ENCODE measurements at regions of chr19 and their contacts with region 1.

Region 1: DNA sequence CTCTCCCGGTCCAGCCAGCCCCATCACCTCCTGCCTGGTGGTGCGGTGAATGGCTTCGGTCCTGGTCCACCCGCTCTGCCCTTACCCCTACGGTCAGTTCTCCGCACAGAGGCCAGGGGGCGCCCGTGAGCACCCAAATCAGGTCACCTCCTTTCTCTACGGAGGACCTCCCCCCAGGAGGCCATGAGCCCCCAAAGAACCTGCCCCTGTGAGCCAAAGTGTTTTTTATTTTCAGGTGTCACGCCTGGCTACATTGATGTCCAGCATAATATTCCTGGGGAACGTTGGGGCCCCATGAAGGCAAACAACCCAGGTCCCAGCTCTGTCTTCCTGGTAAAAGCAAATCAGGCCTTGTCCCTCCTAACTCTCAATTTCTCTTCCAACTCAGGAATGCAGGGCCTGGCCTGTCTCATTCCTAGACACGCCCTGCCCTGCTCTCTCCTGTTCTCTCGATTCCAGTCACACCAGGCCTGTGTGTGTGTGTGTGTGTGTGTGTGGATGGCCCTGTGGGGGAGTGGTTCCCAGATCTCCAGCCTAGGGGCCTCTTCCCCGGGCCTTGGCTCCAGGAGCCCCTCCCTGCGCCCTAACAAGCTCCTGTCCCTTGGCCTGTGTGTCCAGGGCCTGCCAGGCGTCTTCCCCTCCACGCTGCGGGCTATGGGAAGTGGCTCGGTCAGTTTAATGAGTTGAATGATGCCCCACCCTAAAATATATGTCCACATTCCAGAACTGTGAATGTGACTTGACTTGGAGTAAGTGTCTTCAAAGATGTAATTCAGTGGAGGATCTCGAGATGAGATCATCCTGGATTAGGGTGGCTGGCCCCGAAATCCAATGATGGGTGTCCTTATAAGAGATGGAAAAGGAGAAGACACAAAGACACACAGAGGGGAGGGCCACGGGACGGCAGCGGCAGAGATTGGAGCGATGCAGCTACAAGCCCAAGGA is 9.8 kb upstream of the GIPC1 start:
- DNase-seq: peak; percentile 79
- H3K4me3 Mint-ChIP-seq: no peak overlapping the region
- H3K27ac Mint-ChIP-seq: peak overlapping the region; percentile 57
- H3K4me1 Mint-ChIP-seq: peaks cover 44% of the 10 kb centered on the region
- H3K27me3 Mint-ChIP-seq: peaks cover 2% of the 10 kb centered on the region

Region 2: DNA sequence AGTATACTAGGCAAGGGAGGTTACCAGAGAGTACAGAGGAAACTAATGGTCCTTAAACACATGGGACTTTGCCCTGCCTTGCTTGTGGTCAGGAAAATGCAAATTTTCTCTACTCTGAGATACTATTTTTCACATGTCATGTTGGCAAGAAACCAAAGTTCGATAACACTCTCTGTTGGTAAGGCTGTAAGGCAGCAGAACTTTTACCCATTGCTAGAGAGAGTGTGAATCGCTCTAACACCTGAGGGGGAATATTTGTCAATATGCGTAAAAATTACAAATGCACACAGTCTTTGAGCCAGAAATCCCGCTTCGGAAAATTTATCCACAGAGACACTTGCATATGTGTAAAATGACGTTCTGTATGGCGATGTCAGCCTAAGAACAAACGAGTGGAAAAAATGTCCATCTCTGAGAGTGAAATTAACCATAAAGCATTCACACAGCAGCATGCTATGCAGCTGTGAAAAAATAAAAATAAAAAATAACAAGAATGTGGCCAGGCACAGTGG is 490.2 kb before region 1 on chr19:
- CTCF ChIA-PET with region 1: no interaction called
- POLR2A ChIA-PET with region 1: no interaction called
- DNase-seq: no peak
- H3K4me3 Mint-ChIP-seq: no peak overlapping the region
- H3K27ac Mint-ChIP-seq: no peak overlapping the region
- H3K4me1 Mint-ChIP-seq: peaks cover 7% of the 10 kb centered on the region
- H3K27me3 Mint-ChIP-seq: no peaks in the 10 kb centered on the region

Region 3: DNA sequence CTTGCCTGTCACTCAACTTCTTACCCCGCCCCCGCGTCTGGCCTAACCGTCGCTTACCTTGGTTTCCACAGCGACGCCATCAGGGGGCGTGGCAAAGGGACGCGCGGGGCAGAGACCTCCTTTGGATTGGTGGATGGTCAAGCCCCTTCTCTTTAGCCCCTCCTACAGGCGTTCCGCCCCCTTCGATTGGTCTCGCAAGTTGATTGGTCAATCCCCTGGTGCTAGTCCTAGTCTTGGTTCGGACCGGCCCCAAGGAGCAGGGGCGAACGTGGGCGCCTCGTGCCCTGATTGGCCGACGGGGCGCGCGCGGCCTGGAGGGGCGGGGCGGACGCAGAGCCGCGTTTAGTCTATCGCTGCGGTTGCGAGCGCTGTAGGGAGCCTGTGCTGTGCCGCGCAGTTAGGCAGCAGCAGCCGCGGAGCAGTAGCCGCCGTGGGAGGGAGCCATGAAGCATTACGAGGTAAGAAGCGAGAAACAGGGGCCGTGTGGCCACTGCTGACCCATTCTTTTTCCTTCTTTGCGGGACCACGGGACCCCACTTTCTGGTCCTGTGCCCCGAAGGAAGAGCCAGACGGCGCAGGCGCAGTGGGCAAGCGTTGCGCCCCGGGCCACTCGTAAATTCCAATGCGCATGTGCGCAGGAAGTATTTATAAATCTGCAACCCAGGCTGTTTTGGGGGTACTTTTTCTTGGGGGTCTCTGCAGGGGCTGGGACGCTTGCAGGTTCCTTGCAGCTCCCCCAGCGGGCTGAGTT is 23.7 kb after region 1 on chr19 and contains the start of gene TECR:
- CTCF ChIA-PET with region 1: interaction called, 20 read pairs
- POLR2A ChIA-PET with region 1: interaction called, 316 read pairs
- DNase-seq: peak; percentile 100
- H3K4me3 Mint-ChIP-seq: peak within 1 kb of the TSS; percentile 95
- H3K27ac Mint-ChIP-seq: peak within 1 kb of the TSS; percentile 91
- H3K4me1 Mint-ChIP-seq: peaks cover 30% of the 10 kb centered on the region
- H3K27me3 Mint-ChIP-seq: no peaks in the 10 kb centered on the region
- total RNA-seq, gene TECR: 171 to 178 TPM

Measured in activated CD4-positive, alpha-beta memory T cell treated with anti-CD3 and anti-CD28 coated beads, Interleukin-2, amount 10 ng/mL, durations not matched to agents 7 days and 5 days (primary cell).